A673 (cell line): ENCODE measurements at regions of chr18 and their contacts with region 1.

Region 1: DNA sequence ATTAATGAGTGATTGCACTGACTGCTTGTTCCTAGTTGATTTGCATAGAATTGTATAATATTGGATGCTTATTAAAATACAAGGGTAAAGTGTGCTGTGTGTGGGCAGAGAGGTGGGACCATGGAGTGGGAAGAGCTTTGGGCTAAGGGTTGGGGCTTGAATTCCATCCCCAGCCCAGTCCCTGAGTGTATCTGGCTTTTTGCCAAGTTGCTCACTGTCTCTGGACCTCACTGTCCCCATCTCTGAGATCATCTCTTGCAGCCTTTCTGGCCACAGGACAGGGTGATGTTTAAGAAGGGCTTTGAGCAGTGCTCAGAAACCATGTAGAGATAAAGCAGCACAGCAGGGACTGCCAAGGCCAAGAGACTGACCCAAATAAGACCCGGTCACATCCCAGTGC is 127.5 kb upstream of the MEX3C start:
- DNase-seq: no peak
- H3K4me3 ChIP-seq: no peak overlapping the region
- H3K27ac ChIP-seq: peak overlapping the region; percentile 12
- H3K4me1 ChIP-seq: peaks cover 45% of the 10 kb centered on the region
- H3K27me3 ChIP-seq: no peaks in the 10 kb centered on the region
- CTCF ChIP-seq: no peak

Region 2: DNA sequence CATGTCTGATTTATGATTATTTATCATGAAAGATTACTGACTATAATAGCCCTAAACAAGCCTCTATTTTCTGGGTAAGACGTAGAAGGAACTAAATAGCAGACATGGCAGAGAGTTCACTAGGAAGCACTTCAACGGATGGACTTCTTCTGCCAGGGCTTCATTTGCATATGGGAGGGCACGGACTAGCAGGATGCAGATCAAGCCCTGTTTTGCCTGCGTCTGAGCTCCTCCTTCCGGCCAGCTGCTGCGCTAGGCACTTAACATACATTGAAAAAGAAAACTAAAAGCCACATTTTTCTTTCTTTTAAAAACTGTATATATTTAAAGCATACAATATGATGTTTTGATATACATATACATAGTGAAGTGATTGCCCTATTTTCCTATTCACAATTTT is 212.5 kb after region 1 on chr18:
- CTCF ChIA-PET with region 1: no interaction called
- POLR2A ChIA-PET with region 1: no interaction called
- intact Hi-C with region 1: loop called (anchors 5 kb)
- DNase-seq: peak; percentile 60
- H3K4me3 ChIP-seq: no peak overlapping the region
- H3K27ac ChIP-seq: no peak overlapping the region
- H3K4me1 ChIP-seq: peaks cover 2% of the 10 kb centered on the region
- H3K27me3 ChIP-seq: no peaks in the 10 kb centered on the region
- CTCF ChIP-seq: peak; percentile 54